ENCODE measurements at regions of chr20 and their contacts with region 1.

Region 1: DNA sequence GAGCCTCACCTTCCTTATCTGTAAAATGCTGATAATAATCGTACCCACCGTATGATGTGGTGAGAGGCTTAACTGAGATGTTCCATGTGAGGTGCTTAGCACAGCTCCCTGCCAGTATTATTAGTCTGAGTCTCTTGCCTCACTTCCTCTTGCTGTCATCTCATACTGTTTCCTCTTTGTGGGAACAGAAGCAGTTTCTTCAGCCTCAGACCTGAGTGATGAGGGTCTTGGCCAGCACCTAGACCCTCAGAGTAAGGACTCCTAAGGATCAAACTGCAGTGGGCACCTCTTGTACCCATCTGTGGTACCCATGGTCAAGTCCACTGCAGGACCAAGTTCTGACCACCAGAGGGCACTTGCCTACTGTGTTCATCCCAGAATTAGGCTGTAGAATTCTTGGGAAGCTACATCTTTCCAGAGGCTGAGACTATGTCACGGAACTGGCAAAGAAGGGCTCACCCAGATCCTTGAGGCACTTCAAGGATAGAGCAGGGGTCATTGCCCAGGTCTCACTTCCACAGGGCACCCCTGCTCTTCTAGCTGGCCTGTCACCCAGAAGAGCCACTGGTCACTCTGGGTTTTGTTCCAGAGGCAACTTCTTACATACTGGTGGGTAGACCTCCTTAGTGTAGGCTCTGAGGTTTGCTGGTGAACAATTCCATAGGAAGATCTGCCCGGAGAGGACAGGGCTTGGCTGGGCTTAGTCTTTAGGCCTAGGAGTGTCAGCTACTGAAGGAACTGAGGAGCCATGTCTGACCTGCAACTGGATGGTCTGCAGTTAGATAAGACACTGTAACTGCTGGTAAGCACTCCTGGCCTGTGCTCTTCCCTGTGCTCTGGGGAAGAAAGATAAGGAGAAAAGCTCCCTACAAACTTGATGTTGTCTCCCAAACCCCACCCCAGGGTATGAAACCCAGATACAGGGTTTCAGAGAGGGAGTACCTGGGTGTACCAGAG is 20.6 kb upstream of the SGK2 start:
- DNase-seq: peak; percentile 63
- H3K4me3 Mint-ChIP-seq: no peak overlapping the region
- H3K27ac Mint-ChIP-seq: peak overlapping the region; percentile 12
- H3K4me1 Mint-ChIP-seq: no peaks in the 10 kb centered on the region
- H3K27me3 Mint-ChIP-seq: peaks cover 3% of the 10 kb centered on the region

Region 2: DNA sequence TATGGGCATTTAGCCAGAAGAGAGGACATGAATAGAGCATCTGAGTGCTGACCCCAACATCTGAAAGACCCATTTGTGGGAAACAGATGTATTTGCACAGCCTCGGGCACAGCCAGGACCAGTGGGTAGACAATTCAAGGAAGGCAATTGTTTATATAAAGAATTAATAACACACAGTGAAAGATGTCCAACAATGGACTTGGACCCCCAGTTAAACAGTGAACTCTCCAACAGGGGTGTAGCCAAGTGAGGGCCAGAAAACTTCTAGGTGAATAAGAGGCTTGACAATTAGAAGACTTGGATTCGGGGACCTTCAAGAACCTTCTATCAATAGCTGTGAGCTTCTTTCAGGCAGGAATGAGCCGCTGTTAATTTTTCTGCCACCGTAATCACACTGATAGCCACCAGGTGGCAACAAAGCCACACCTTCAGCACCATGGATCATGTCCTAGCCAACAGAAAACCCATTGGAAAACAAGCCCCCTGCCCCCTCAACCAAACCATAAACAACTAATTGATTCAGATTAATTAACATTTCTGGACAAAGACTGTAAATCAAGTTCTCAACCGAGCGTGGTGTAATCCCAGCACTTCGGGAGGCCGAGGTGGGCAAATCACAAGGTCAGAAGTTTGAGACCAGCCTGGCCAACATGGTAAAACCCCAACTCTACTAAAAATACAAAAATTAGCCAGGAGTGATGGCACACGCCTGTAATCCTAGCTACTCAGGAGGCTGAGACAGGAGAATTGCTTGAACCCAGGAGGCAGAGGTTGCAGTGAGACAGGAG is 89.3 kb before region 1 on chr20:
- CTCF ChIA-PET with region 1: interaction called, 17 read pairs
- DNase-seq: peak; percentile 62
- H3K4me3 Mint-ChIP-seq: no peak overlapping the region
- H3K27ac Mint-ChIP-seq: no peak overlapping the region
- H3K4me1 Mint-ChIP-seq: no peaks in the 10 kb centered on the region
- H3K27me3 Mint-ChIP-seq: peaks cover 53% of the 10 kb centered on the region

Region 3: GRCh38 chr20:43691928-43692524 is 153.8 kb after region 1 on chr20:
- CTCF ChIA-PET with region 1: interaction called, 31 read pairs
- DNase-seq: peak; percentile 76
- H3K4me3 Mint-ChIP-seq: no peak overlapping the region
- H3K27ac Mint-ChIP-seq: peak overlapping the region; percentile 45
- H3K4me1 Mint-ChIP-seq: no peaks in the 10 kb centered on the region
- H3K27me3 Mint-ChIP-seq: no peaks in the 10 kb centered on the region

Region 4: DNA sequence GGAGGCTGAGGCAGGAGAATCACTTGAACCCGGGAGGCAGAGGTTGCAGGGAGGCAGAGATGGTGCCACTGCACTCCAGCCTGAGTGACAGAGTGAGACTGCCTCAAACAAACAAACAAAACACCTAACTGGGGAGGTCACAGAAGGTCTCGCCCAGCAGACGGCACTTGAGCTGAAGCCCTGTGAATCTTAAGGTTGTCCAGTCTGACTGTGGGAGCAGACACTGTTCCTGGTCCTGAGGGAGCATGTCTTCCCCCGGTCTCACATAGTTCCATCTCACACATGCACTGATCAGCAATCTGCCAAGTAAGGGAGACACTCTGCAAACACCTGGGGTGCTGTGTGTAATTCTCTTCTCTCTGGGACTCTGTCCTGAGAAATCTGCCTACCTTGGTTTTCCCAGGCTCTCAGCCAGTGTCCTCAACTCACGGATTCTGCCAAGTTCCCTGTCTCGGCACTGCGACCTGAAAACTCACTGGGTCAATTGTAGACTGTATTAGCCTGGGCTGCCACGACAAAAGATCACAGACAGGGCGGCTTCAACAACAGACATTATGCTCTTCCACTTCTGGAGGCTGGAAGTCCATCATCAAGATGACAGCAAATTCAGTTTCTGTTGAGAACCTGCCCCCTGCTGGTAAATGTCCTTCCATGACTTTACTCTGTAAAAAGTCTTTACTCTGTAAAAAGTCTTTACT is 554.5 kb after region 1 on chr20:
- CTCF ChIA-PET with region 1: interaction called, 16 read pairs
- DNase-seq: peak; percentile 63
- H3K4me3 Mint-ChIP-seq: no peak overlapping the region
- H3K27ac Mint-ChIP-seq: no peak overlapping the region
- H3K4me1 Mint-ChIP-seq: peaks cover 3% of the 10 kb centered on the region
- H3K27me3 Mint-ChIP-seq: peaks cover 32% of the 10 kb centered on the region

Measured in activated naive CD4-positive, alpha-beta T cell treated with anti-CD3 and anti-CD28 coated beads, Interleukin-2, amount 10 ng/mL, durations not matched to agents 7 days and 5 days (primary cell).